PC-3 (cell line): ENCODE measurements at regions of chr9 and their contacts with region 1.

Region 1: GRCh38 chr9:128881901-128882681 is at the starts of genes KYAT1 and LRRC8A:
- DNase-seq: peak; percentile 95
- ATAC-seq: peak; percentile 85
- H3K4me3 ChIP-seq: peak within 1 kb of the TSS; percentile 100
- H3K27ac ChIP-seq: peak within 1 kb of the TSS; percentile 34; the same call in 1 of the 2 replicates
- H3K4me1 ChIP-seq: peaks cover 24% of the 10 kb centered on the region
- H3K27me3 ChIP-seq: no peaks in the 10 kb centered on the region
- CTCF ChIP-seq: no peak
- total RNA-seq, gene KYAT1: 7.4 and 12.9 TPM in 2 replicates
- total RNA-seq, gene LRRC8A: 58.9 and 65.5 TPM in 2 replicates

Region 2: GRCh38 chr9:128917151-128917849 is 35.2 kb after region 1 on chr9:
- CTCF ChIA-PET with region 1: no interaction called
- POLR2A ChIA-PET with region 1: no interaction called
- intact Hi-C with region 1: loop called (anchors 5 kb)
- DNase-seq: peak; percentile 78
- ATAC-seq: peak; percentile 41
- H3K4me3 ChIP-seq: no peak overlapping the region
- H3K27ac ChIP-seq: peak overlapping the region; percentile 75
- H3K4me1 ChIP-seq: peaks cover 38% of the 10 kb centered on the region
- H3K27me3 ChIP-seq: no peaks in the 10 kb centered on the region
- CTCF ChIP-seq: no peak